Mammary epithelial cell (primary cell): ENCODE measurements at regions of chr4 and their contacts with region 1.

Region 1: GRCh38 chr4:103036169-103036568 is 16.7 kb upstream of the SLC9B1 start:
- DNase-seq: no peak
- H3K4me3 ChIP-seq: no peak overlapping the region
- H3K27ac ChIP-seq: no peak overlapping the region
- H3K4me1 ChIP-seq: no peaks in the 10 kb centered on the region
- H3K27me3 ChIP-seq: no peaks in the 10 kb centered on the region
- CTCF ChIP-seq: no peak

Region 2: GRCh38 chr4:103099691-103100392 is 63.7 kb after region 1 on chr4 and contains the start of gene BDH2:
- CTCF ChIA-PET with region 1: interaction called, 16 read pairs
- dilution Hi-C with region 1: no loop called
- in situ Hi-C with region 1: no loop called
- intact Hi-C with region 1: no loop called
- DNase-seq: peak; percentile 91
- H3K4me3 ChIP-seq: peak within 1 kb of the TSS; percentile 48 to 71 (median 55)
- H3K27ac ChIP-seq: peak within 1 kb of the TSS; percentile 54
- H3K4me1 ChIP-seq: no peaks in the 10 kb centered on the region
- H3K27me3 ChIP-seq: no peaks in the 10 kb centered on the region
- CTCF ChIP-seq: peak; percentile 64 to 68
- total RNA-seq, gene BDH2: 20.7 to 23.0 TPM

Region 3: DNA sequence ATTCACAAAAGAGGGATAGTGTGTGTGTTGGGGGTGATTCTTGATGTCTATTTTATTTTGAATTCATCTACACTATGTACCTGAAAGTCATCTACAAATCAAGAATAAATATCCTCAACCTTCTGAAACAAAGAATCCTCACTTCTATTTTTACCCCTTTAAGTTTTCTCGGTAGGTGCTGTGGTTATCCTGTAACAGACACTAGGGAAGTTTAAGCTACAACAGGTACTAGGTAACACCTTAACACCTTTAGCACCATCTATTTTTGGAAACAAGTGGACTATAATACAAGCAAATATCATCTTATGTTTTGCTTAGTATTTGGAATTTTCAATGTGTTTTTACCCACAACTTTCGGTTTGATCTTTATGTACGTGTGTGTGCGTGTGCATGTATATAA is 75.4 kb after region 1 on chr4:
- CTCF ChIA-PET with region 1: no interaction called
- dilution Hi-C with region 1: no loop called
- in situ Hi-C with region 1: no loop called
- intact Hi-C with region 1: no loop called
- DNase-seq: no peak
- H3K4me3 ChIP-seq: no peak overlapping the region
- H3K27ac ChIP-seq: no peak overlapping the region
- H3K4me1 ChIP-seq: no peaks in the 10 kb centered on the region
- H3K27me3 ChIP-seq: no peaks in the 10 kb centered on the region
- CTCF ChIP-seq: no peak